Dendritic cell treated with granulocyte-macrophage colony-stimulating factor and Interleukin-4, amounts not matched to agents 40 ng/mL and 50 ng/mL, for 4 days (primary cell): ENCODE measurements at regions of chr16 and their contacts with region 1.

Region 1: GRCh38 chr16:9047686-9048301 is 43.6 kb upstream of the HAPSTR1 start:
- H3K4me3 Mint-ChIP-seq: peak overlapping the region; percentile 30
- H3K27ac Mint-ChIP-seq: peak overlapping the region; percentile 78
- H3K4me1 Mint-ChIP-seq: peaks cover 26% of the 10 kb centered on the region
- H3K27me3 Mint-ChIP-seq: peaks cover 12% of the 10 kb centered on the region

Region 2: GRCh38 chr16:9079430-9079812 is 31.6 kb after region 1 on chr16:
- intact Hi-C with region 1: loop called (anchors 1 kb)
- H3K4me3 Mint-ChIP-seq: no peak overlapping the region
- H3K27ac Mint-ChIP-seq: peak overlapping the region; percentile 22
- H3K4me1 Mint-ChIP-seq: peaks cover 35% of the 10 kb centered on the region
- H3K27me3 Mint-ChIP-seq: no peaks in the 10 kb centered on the region